Mammary epithelial cell (primary cell): ENCODE measurements at regions of chr6 and their contacts with region 1.

Region 1: DNA sequence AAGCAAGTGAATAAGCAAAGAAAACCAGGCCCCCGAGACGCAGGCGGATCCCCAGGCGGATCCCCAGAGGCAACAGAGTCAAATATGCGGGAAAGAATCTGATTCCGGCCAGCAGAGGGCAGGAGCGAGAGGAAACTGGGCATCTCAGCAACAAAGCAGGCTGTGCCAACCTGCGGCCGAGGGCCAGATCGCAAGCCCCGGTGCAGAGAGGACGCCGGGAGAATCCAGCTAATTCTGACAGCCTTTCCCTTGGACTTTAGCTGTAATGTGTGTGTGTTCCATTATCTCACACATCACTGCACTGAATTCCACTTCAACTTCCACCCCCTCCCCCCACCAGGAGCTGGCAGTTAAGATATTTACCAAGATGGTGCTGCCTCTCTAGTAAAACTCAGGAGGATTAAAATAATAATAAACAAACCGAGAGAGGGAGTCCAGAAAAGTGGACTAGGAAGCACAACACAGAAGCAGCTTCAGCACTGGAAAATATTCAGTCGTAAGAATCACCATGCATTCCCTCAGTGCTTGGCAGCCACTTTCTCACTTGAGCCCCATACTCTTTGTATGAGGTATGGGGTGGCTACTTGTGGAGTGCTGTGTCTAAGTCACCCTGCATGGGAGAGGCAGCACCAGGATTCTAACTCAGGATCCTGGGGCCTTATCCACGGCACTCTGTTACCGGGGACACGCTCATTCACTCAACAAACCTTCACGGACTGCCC is 66.2 kb upstream of the SNX9 start:
- DNase-seq: peak; percentile 67
- H3K4me3 ChIP-seq: no peak overlapping the region
- H3K27ac ChIP-seq: no peak overlapping the region
- H3K4me1 ChIP-seq: peaks cover 37% of the 10 kb centered on the region
- H3K27me3 ChIP-seq: no peaks in the 10 kb centered on the region
- CTCF ChIP-seq: peak; percentile 85 to 90

Region 2: DNA sequence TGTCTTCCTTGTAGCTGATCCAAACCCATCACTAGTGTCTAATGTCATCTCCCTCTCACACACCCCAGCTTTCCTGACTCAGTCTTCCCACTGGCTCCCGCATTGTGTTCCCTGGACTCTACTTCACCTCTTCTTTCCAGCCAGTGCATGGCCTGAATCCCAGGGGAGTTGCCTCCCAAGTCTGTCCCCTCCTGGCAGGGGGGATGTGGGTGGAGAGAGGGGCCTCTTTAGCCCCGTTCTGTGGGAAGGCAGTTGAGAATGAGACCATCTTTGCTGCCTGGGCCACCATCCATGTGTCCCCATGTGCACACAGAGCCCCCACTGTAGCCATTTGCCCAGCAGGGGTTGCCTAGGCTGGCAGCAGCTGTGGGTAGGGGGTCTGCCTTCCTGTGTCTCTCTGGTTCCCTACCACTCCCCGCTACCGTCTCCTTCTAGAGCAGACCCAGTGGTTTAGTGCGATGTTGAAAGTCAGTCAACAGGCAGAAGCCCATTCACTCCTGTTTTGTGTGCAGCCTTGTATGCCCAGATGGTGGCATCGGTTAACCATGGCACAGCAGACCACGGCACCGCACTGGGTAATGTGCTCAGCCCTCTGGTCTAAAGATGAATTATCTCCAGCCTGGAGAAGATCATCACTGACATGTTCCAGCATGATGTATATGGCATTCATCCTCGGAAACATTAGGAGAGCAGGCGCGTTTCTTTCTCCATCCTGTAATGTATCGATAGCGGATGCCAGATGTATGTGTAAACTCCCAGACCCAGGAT is 112.6 kb before region 1 on chr6:
- CTCF ChIA-PET with region 1: no interaction called
- dilution Hi-C with region 1: no loop called
- in situ Hi-C with region 1: no loop called
- intact Hi-C with region 1: loop called (anchors 2 kb)
- DNase-seq: peak; percentile 39
- H3K4me3 ChIP-seq: no peak overlapping the region
- H3K27ac ChIP-seq: no peak overlapping the region
- H3K4me1 ChIP-seq: peaks cover 13% of the 10 kb centered on the region
- H3K27me3 ChIP-seq: no peaks in the 10 kb centered on the region
- CTCF ChIP-seq: peak; percentile 51 to 59

Region 3: DNA sequence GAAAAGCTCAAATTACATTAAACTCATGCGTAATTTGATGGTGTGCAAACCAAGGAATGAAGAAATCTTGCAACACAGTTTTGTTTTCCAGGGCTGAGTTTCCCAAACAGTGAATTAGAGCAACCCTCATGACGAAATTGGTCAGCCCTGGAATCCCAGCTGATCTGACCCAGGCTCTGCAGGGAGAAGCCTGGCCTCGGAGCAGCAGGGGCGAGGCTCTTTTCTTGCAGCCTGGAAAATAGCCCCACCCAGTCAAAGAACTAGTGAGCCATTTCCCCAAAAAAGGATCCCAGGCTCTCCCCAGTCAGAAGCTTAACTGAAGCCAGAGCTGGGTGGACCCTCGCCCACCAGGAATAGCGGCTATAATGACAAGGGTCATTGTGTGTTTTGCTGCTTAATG is 41.1 kb before region 1 on chr6:
- CTCF ChIA-PET with region 1: no interaction called
- dilution Hi-C with region 1: no loop called
- in situ Hi-C with region 1: no loop called
- intact Hi-C with region 1: no loop called
- DNase-seq: peak; percentile 46
- H3K4me3 ChIP-seq: no peak overlapping the region
- H3K27ac ChIP-seq: no peak overlapping the region
- H3K4me1 ChIP-seq: peaks cover 3% of the 10 kb centered on the region
- H3K27me3 ChIP-seq: no peaks in the 10 kb centered on the region
- CTCF ChIP-seq: no peak

Region 4: GRCh38 chr6:157800420-157801237 is 43.8 kb after region 1 on chr6:
- CTCF ChIA-PET with region 1: no interaction called
- dilution Hi-C with region 1: loop called (anchors 5 kb)
- in situ Hi-C with region 1: no loop called
- intact Hi-C with region 1: loop called (anchors 5 kb)
- DNase-seq: peak; percentile 68
- H3K4me3 ChIP-seq: no peak overlapping the region
- H3K27ac ChIP-seq: no peak overlapping the region
- H3K4me1 ChIP-seq: peaks cover 10% of the 10 kb centered on the region
- H3K27me3 ChIP-seq: no peaks in the 10 kb centered on the region
- CTCF ChIP-seq: no peak

Region 5: GRCh38 chr6:157873735-157874344 is 117.0 kb after region 1 on chr6:
- CTCF ChIA-PET with region 1: interaction called, 4 read pairs
- dilution Hi-C with region 1: loop called (anchors 5 kb)
- in situ Hi-C with region 1: loop called (anchors 5 kb)
- intact Hi-C with region 1: loop called (anchors 1 kb)
- DNase-seq: peak; percentile 56
- H3K4me3 ChIP-seq: no peak overlapping the region
- H3K27ac ChIP-seq: no peak overlapping the region
- H3K4me1 ChIP-seq: no peaks in the 10 kb centered on the region
- H3K27me3 ChIP-seq: no peaks in the 10 kb centered on the region
- CTCF ChIP-seq: peak; percentile 82 to 96

Region 6: GRCh38 chr6:157879873-157880254 is 123.0 kb after region 1 on chr6:
- CTCF ChIA-PET with region 1: no interaction called
- dilution Hi-C with region 1: no loop called
- in situ Hi-C with region 1: loop called in 1 of 2 experiments (anchors 5 kb)
- intact Hi-C with region 1: no loop called
- DNase-seq: no peak
- H3K4me3 ChIP-seq: no peak overlapping the region
- H3K27ac ChIP-seq: no peak overlapping the region
- H3K4me1 ChIP-seq: no peaks in the 10 kb centered on the region
- H3K27me3 ChIP-seq: no peaks in the 10 kb centered on the region
- CTCF ChIP-seq: no peak